Activated B cell treated with CpG ODN at 0.5 μM for 24 hours (primary cell): ENCODE measurements at regions of chr1 and their contacts with region 1.

Region 1: GRCh38 chr1:117534995-117535467 is 70.8 kb upstream of the TENT5C start:
- DNase-seq: peak; percentile 26
- ATAC-seq: peak; percentile 85
- H3K4me3 Mint-ChIP-seq: peak overlapping the region; percentile 16
- H3K27ac Mint-ChIP-seq: no peak overlapping the region
- H3K4me1 Mint-ChIP-seq: peaks cover 2% of the 10 kb centered on the region
- H3K27me3 Mint-ChIP-seq: no peaks in the 10 kb centered on the region
- CTCF ChIP-seq: no peak

Region 2: GRCh38 chr1:117512743-117513321 is 22.2 kb before region 1 on chr1:
- CTCF ChIA-PET with region 1: interaction called, 30 read pairs
- POLR2A ChIA-PET with region 1: no interaction called
- intact Hi-C with region 1: loop called (anchors 1 kb)
- DNase-seq: no peak
- ATAC-seq: no peak
- H3K4me3 Mint-ChIP-seq: no peak overlapping the region
- H3K27ac Mint-ChIP-seq: no peak overlapping the region
- H3K4me1 Mint-ChIP-seq: peaks cover 4% of the 10 kb centered on the region
- H3K27me3 Mint-ChIP-seq: no peaks in the 10 kb centered on the region
- CTCF ChIP-seq: no peak

Region 3: DNA sequence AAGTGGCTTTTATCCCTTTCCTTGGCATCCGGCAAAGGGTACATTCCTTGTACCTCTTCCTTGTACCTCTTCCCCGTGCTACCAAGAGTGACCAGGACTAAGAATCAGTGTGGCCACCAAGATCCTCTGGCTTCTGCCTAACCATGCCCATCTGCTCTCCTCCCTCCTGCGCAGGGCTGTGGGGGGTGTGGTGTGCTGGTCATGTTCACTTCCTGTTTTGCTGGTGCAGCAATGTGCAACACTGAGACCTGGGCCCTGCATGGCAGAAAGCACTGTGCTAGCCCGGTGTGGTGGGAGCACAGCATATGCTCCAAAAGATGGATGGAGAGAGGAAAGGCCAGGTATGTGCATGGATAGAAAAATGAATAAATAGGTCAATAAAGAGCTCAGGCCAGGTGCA is 37.5 kb after region 1 on chr1:
- CTCF ChIA-PET with region 1: interaction called, 5 read pairs
- POLR2A ChIA-PET with region 1: interaction called, 5 read pairs
- intact Hi-C with region 1: loop called (anchors 5 kb)
- DNase-seq: peak; percentile 40
- ATAC-seq: peak; percentile 97
- H3K4me3 Mint-ChIP-seq: no peak overlapping the region
- H3K27ac Mint-ChIP-seq: peak overlapping the region; percentile 13
- H3K4me1 Mint-ChIP-seq: peaks cover 25% of the 10 kb centered on the region
- H3K27me3 Mint-ChIP-seq: no peaks in the 10 kb centered on the region
- CTCF ChIP-seq: no peak

Region 4: GRCh38 chr1:117654493-117655219 is 119.6 kb after region 1 on chr1:
- CTCF ChIA-PET with region 1: interaction called, 25 read pairs
- POLR2A ChIA-PET with region 1: interaction called, 4 read pairs
- intact Hi-C with region 1: loop called (anchors 1 kb)
- DNase-seq: peak; percentile 35
- ATAC-seq: peak; percentile 67
- H3K4me3 Mint-ChIP-seq: peak overlapping the region; percentile 49
- H3K27ac Mint-ChIP-seq: peak overlapping the region; percentile 93
- H3K4me1 Mint-ChIP-seq: peaks cover 92% of the 10 kb centered on the region
- H3K27me3 Mint-ChIP-seq: no peaks in the 10 kb centered on the region
- CTCF ChIP-seq: no peak

Region 5: DNA sequence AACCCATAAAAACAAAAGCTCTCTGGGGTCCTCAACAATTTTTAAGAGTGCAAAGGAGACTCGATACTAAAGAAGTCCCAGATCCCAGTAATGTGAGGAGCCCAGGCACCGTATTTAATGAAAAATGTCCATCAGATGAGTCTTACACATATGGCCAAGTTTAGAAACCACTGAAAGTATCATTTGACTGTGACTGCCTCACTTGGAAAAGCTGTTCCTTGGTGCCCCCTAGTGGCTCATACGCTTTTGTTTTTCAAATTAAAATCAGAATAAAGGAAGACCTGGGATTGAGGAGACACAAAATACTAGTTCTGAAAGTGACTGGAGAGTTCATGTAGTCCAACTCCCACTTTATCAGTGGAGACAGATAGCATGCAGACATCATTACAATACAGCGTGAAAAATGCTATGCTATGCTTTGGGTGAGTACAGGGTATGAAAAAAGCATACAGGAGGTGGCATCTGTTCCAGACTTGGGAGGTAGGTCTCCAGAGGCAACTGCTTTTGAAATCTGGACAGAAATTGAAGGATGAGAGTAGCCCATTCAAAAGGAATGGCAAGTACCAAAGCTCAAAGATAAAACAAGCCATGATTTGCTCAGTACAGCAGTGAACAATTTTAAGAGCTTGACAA is 360.6 kb after region 1 on chr1:
- CTCF ChIA-PET with region 1: interaction called, 11 read pairs
- POLR2A ChIA-PET with region 1: no interaction called
- intact Hi-C with region 1: no loop called
- DNase-seq: no peak
- ATAC-seq: peak; percentile 68
- H3K4me3 Mint-ChIP-seq: no peak overlapping the region
- H3K27ac Mint-ChIP-seq: no peak overlapping the region
- H3K4me1 Mint-ChIP-seq: no peaks in the 10 kb centered on the region
- H3K27me3 Mint-ChIP-seq: no peaks in the 10 kb centered on the region
- CTCF ChIP-seq: peak; percentile 34